AG04450 (cell line): ENCODE measurements at regions of chr5 and their contacts with region 1.

Region 1: DNA sequence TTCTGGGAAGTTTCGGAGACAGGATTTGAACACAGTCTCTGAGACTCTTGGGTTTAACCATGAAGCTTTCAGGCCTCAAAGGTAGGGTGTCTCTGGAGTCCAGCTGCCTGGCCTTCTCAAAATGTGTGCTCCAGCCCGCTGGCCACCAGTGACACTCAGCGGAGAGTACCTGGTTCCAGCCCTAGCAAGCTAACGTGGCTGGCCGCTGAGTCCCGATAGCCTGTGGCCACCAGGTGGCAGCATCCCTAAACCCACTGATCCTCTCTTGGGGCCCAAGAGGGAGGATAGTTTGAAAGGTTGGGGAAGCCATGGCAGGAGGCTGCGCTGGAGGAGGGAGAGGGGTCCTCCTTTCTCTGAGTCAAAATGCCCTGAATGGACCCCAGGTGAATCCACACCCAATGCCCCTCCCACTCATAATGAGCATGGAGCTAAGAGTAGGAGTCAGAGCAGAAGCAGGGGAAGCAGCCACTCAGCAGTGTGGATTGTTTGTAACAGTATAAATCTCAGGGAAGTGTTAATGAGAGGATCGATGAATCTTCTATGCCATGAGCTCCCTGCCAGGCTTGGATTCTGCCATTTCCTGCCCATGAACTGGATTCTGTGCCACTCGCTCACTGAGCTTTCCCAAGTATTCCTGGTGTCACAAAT is 5.4 kb upstream of the TIFAB start:
- DNase-seq: no peak
- H3K4me3 ChIP-seq: no peak overlapping the region
- H3K27ac ChIP-seq: no peak overlapping the region
- H3K27me3 ChIP-seq: peaks cover 31% of the 10 kb centered on the region
- CTCF ChIP-seq: peak; percentile 74

Region 2: GRCh38 chr5:135013947-135014570 is 443.5 kb before region 1 on chr5:
- CTCF ChIA-PET with region 1: no interaction called
- POLR2A ChIA-PET with region 1: no interaction called
- DNase-seq: peak; percentile 33
- H3K4me3 ChIP-seq: no peak overlapping the region
- H3K27ac ChIP-seq: no peak overlapping the region
- H3K27me3 ChIP-seq: no peaks in the 10 kb centered on the region
- CTCF ChIP-seq: no peak

Region 3: GRCh38 chr5:135437796-135438560 is 19.6 kb before region 1 on chr5:
- CTCF ChIA-PET with region 1: interaction called, 13 read pairs
- POLR2A ChIA-PET with region 1: no interaction called
- DNase-seq: peak; percentile 92
- H3K4me3 ChIP-seq: no peak overlapping the region
- H3K27ac ChIP-seq: peak overlapping the region; percentile 82
- H3K27me3 ChIP-seq: no peaks in the 10 kb centered on the region
- CTCF ChIP-seq: peak; percentile 21

Region 4: GRCh38 chr5:135488727-135489465 is 31.3 kb after region 1 on chr5:
- CTCF ChIA-PET with region 1: interaction called, 11 read pairs
- POLR2A ChIA-PET with region 1: no interaction called
- DNase-seq: peak; percentile 45
- H3K4me3 ChIP-seq: peak overlapping the region; percentile 61
- H3K27ac ChIP-seq: peak overlapping the region; percentile 11
- H3K27me3 ChIP-seq: peaks cover 18% of the 10 kb centered on the region
- CTCF ChIP-seq: no peak